ENCODE measurements at regions of chr6 and their contacts with region 1.

Region 1: DNA sequence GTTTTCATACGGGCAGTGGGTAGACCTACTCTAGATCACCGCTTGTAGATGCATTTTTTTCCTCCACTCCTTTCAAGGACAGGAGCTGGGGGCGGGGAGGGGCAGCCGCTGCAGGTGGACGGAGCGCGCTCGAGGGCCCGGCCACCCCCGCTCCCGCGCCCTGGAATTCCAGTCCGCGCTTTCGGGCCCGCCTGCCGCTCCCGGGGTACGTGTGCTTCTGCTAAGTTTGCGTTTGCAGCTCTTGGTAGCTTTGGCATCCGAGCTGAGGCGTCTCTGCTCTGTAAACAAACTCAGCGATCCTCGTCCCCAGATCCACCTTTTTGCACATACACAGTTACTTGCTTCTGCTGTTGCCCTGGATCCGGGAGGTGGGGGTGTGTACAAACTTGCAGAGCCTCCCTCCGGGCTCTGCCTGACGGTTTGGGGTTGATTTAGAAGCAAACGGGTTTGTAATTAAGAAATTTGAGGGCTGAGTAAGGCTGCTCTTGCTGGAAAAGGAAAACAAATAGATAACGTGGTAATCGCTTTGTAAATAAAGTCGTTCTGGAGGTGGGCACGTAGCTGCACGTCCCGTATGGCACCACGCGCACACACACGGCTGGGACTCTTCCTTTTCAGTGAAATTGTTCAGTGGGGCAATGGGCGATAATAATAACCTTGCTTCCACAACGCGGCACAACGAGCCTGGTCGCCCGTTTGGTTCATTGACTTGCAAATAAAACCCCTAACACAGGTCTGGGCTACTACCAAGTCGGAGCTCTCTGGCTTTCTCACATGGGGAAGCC is 976 bp upstream of the CITED2 start:
- DNase-seq: peak; percentile 88
- ATAC-seq: peak; percentile 48
- H3K4me3 Mint-ChIP-seq: peak overlapping the region; percentile 88
- H3K27ac Mint-ChIP-seq: peak overlapping the region; percentile 96
- H3K4me1 Mint-ChIP-seq: peaks cover 18% of the 10 kb centered on the region
- H3K27me3 Mint-ChIP-seq: no peaks in the 10 kb centered on the region

Region 2: GRCh38 chr6:139124887-139125672 is 250.3 kb before region 1 on chr6:
- POLR2A ChIA-PET with region 1: interaction called, 15 read pairs
- DNase-seq: peak; percentile 66
- ATAC-seq: peak; percentile 99
- H3K4me3 Mint-ChIP-seq: peak overlapping the region; percentile 80
- H3K27ac Mint-ChIP-seq: peak overlapping the region; percentile 98
- H3K4me1 Mint-ChIP-seq: peaks cover 33% of the 10 kb centered on the region
- H3K27me3 Mint-ChIP-seq: no peaks in the 10 kb centered on the region

Region 3: DNA sequence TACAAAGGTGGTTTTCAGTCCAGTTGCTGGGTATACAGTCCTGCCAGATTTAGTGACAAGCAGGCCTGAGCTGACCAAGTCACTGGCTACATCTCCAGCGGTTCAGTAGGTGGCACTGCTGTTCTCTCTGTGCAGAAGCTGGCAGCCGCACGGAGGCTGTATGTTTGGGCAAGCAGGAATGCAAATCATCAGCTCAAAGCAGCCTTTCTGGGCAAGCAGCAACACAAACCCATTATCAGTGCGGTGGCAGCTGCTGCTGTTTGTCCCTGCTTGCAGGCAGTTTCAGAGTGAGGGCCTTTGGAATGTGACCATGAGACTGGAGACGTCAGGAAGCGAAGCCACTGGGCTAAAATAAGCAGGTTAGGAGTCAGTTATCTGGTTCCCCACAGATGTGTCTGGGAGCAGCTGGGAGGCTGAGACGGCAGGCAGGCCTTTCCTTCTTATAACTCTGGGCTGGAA is 156.1 kb before region 1 on chr6:
- POLR2A ChIA-PET with region 1: interaction called, 10 read pairs
- DNase-seq: peak; percentile 62
- ATAC-seq: peak; percentile 99
- H3K4me3 Mint-ChIP-seq: no peak overlapping the region
- H3K27ac Mint-ChIP-seq: peak overlapping the region; percentile 87
- H3K4me1 Mint-ChIP-seq: peaks cover 13% of the 10 kb centered on the region
- H3K27me3 Mint-ChIP-seq: no peaks in the 10 kb centered on the region

Region 4: DNA sequence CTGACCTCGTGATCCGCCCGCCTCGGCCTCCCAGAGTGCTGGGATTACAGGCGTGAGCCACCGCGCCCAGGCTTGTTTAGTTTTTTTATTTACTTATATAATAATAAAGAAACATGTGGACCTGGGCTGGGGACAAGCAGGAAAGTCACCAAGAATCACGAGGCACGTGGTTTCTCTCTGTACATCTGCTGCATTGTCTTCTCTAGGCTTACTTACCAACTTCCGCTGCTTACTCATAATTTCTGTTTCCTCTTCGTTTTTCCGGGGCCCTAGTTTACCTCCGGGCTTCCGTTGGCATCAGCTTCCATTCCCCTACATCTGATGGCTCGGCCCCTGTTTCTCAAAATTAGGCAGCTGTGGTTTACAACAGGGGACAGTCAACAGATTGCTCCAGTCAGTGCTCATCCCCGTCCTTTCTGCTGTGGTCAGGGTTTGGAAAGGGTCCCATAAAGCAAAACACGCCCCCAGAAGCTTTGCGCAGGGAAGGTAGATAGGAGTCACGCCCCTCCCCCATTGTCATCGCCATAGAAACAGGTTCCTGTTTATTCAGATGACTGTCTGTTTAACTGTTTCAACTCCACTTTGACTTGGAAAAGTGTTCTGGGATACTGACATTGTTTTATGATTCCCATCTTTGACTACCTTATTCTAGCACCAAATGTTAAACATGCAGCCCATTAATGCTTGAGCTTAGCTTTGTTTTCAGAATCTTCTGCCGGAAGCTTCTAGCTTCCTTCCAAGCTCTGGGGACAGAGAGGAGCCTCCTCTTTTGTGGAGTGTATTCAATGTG is 51.7 kb before region 1 on chr6:
- POLR2A ChIA-PET with region 1: interaction called, 26 read pairs
- DNase-seq: peak; percentile 73
- ATAC-seq: peak; percentile 93
- H3K4me3 Mint-ChIP-seq: peak overlapping the region; percentile 76
- H3K27ac Mint-ChIP-seq: peak overlapping the region; percentile 96
- H3K4me1 Mint-ChIP-seq: peaks cover 11% of the 10 kb centered on the region
- H3K27me3 Mint-ChIP-seq: no peaks in the 10 kb centered on the region

Region 5: DNA sequence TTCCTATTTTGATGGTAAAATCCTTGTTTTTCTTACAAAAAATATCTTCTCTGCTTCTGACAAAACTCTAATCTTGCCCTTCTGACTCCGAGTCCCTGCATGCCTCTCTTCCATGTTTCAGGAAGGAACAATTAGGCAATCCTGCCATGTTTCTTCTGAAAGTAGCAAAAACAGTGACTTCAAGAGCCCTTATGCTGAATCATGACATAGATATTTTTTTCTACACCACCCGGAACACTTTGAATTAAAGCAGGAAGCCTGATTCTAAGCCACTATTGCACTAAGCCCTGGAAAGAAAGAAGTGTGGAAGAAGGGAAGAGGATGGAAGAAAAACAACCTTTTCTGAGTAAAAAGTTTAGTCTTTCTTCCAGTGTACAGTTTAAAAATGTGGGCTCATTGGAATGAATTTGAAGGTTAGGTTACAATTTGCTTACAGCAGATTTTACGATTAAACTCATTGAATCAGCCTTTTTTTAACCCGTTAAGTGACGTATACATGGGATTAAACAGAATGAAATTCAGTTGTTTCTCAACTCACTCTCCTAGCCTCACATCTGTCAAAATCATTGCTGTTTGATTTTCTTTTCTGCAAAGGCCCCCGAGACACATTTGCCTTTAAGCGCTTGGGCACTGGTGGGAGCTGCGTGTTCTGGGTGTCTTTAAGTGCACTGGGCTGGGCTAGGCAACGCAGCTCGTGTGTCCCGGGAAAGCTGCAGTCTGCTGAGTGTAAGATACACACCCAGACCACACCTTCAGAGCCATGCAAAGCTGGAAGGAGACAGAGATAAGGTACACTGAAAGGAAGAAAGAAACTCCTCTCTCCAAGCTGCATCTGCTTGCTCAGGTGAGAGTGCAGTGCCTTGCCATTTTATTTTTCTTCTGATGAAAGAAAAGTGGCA is 158.4 kb after region 1 on chr6:
- POLR2A ChIA-PET with region 1: interaction called, 13 read pairs
- DNase-seq: no peak
- ATAC-seq: no peak
- H3K4me3 Mint-ChIP-seq: peak overlapping the region; percentile 16
- H3K27ac Mint-ChIP-seq: peak overlapping the region; percentile 93
- H3K4me1 Mint-ChIP-seq: peaks cover 25% of the 10 kb centered on the region
- H3K27me3 Mint-ChIP-seq: no peaks in the 10 kb centered on the region

Region 6: GRCh38 chr6:140956571-140957369 is 1581.3 kb after region 1 on chr6:
- POLR2A ChIA-PET with region 1: no interaction called
- DNase-seq: no peak
- ATAC-seq: no peak
- H3K4me3 Mint-ChIP-seq: no peak overlapping the region
- H3K27ac Mint-ChIP-seq: no peak overlapping the region
- H3K4me1 Mint-ChIP-seq: no peaks in the 10 kb centered on the region
- H3K27me3 Mint-ChIP-seq: no peaks in the 10 kb centered on the region